Left colon (tissue), 2 donors: ENCODE measurements at regions of chr12 and their contacts with region 1.

Region 1: DNA sequence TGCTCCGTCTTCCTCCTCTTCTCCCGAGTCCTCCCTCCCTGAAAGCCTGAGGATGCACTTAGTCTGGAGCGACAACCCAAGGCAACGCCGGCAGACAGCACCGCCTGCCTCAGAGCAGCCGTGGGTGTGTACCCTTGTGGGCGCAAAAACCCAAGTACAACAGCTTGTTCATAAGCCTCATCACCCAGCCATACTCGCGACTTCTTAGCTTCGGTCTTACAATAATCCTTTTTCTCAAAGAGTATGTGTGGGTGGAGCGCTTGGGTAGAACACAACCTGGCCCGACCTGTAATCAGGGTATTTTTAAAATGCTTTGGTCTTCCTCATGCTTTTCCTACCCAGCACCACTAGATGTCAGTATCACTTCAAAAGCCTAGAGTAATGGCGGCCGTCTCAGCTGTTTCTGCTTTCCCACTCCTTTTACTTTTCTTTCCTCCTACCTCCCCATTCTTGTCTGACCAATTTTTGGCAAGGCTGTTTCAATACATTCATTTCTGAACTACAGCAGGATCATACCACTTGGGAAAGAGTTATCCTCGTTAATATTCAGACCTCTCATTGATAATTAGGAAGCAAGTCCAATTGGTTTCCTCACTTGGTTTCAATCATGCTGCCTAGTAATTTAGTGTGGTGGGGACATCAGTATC is 198.9 kb downstream of the EPS8 start:
- DNase-seq: peak; percentile 38 to 55
- ATAC-seq: peak; percentile 88

Region 2: DNA sequence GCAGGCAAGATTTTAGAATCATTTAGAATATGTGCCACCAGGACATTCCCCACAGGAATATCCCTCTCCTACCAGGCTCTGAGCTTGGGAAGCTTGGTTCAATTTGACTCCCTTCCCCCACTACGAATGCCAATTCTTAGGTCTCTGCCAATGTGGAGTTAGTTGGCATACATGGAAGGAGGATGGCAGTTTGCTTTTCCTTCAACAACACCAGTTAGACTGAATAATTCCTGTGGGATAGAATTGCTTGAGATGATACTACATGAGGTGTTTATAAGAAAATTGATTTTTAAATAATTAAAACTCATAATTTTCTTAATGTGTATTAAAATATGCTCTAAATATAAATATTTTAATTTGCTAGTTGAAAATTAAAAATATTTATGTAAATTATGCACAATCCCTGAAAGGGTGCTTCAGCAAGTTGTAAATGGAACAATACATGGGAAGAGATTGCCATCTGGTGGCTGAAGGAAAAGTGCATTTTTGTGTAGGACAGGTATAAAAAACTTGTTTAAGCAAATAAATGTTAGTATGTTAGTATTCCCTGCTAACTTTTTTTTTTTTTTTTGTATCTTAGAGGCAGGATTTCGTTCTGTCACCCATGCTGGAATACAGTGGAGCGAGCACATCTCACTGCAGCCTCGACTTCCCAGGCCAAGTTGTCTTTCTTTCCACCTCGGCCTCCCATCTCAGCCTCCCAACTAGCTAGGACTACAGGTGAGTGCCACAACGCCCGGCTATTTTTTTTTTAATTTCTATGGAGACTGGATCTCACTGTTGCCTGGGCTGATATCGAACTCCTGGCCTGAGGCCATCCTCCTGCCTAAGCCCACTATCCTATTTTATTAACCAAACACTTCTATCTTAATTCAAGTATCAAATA is 266.0 kb after region 1 on chr12:
- intact Hi-C with region 1: loop called (anchors 2 to 10 kb)
- DNase-seq: no peak
- ATAC-seq: peak; percentile 75

Region 3: DNA sequence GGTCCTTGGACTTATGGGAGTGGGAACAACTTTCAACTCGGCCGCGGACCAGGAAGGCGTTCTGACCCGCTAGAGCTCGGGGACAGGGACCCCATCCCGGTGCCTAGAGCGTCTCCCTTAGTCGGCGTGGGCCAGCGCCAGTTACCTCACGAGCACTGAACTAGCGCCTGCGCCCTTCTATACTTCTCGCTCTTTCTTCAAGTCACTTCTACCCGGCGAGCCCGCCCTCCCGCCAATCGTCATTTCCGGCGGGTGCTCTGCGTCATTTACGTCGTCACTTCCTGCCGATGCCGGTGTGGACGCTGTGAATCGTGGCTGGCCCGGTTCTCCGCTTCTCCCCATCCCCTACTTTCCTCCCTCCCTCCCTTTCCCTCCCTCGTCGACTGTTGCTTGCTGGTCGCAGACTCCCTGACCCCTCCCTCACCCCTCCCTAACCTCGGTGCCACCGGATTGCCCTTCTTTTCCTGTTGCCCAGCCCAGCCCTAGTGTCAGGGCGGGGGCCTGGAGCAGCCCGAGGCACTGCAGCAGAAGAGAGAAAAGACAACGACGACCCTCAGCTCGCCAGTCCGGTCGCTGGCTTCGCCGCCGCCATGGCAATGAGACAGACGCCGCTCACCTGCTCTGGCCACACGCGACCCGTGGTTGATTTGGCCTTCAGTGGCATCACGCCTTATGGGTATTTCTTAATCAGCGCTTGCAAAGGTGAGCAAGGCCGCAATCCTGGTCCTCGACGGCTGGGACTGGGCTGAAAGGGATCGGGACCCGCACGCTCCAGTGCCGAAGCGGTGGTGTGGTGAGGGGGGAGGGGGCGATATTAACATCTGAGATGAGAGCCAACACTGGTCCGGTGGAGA is 292.0 kb after region 1 on chr12 and contains the start of gene STRAP:
- intact Hi-C with region 1: no loop called
- DNase-seq: peak; percentile 95 to 97
- ATAC-seq: peak; percentile 92
- total RNA-seq, gene STRAP: 74.4 to 75.6 TPM